Vagina (tissue), 2 donors: ENCODE measurements at regions of chr9 and their contacts with region 1.

Region 1: DNA sequence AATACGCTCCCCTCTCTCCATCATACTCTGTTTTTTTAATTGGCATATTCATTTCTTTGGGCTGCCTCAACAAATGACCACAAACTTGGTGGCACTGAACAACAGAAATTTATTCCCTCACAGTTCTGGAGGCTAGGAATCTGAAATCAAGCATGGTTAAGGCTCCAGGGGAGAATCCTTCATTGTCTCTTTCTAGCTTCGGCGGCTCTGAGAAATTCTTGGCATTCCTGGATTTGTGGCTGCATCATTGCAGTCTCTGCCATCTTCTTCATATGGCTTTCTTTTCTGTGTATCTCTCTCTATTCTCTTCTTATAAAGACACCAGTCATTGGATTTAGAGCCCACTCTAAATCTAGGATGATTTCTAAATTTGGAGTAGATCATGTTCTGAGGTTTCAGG is 10.9 kb upstream of the SLC24A2 start:
- DNase-seq: no peak
- H3K4me3 ChIP-seq: no peak overlapping the region
- H3K27ac ChIP-seq: no peak overlapping the region
- H3K4me1 ChIP-seq: no peaks in the 10 kb centered on the region
- H3K27me3 ChIP-seq: no peaks in the 10 kb centered on the region
- CTCF ChIP-seq: no peak
- POLR2A ChIP-seq: no peak

Region 2: DNA sequence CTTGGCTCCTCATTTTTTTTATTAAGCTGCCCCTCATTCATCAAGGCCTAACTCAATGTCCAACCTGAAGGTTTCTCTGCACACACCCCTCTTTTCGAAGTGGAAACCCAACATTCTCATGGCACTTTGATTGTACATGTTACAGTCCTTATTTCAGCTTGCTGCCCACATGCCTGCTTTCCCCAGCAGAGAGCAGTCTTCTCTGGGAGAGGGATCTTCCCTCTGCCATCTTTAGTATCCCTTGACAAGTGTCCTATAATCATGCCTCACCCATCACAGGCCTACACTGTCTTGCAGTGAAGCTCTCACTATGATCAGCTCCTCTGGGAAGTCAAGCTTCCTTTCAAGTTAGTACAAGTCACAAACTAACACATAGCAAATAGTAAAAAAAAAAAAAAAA is 215.9 kb before region 1 on chr9:
- intact Hi-C with region 1: loop called (anchors 10 kb)
- DNase-seq: no peak
- H3K4me3 ChIP-seq: no peak overlapping the region
- H3K27ac ChIP-seq: no peak overlapping the region
- H3K4me1 ChIP-seq: no peaks in the 10 kb centered on the region
- H3K27me3 ChIP-seq: no peaks in the 10 kb centered on the region
- CTCF ChIP-seq: no peak
- POLR2A ChIP-seq: no peak